ENCODE measurements at regions of chr20 and their contacts with region 1.

Region 1: GRCh38 chr20:49484180-49485140 is 2.0 kb upstream of the KCNB1 start:
- DNase-seq: peak; percentile 73
- H3K4me3 ChIP-seq: peak overlapping the region; percentile 11 to 49 (median 41)
- H3K27ac ChIP-seq: no peak overlapping the region
- H3K4me1 ChIP-seq: peaks cover 6% of the 10 kb centered on the region
- H3K27me3 ChIP-seq: peaks cover 4% of the 10 kb centered on the region
- CTCF ChIP-seq: peak; percentile 48 to 84

Region 2: DNA sequence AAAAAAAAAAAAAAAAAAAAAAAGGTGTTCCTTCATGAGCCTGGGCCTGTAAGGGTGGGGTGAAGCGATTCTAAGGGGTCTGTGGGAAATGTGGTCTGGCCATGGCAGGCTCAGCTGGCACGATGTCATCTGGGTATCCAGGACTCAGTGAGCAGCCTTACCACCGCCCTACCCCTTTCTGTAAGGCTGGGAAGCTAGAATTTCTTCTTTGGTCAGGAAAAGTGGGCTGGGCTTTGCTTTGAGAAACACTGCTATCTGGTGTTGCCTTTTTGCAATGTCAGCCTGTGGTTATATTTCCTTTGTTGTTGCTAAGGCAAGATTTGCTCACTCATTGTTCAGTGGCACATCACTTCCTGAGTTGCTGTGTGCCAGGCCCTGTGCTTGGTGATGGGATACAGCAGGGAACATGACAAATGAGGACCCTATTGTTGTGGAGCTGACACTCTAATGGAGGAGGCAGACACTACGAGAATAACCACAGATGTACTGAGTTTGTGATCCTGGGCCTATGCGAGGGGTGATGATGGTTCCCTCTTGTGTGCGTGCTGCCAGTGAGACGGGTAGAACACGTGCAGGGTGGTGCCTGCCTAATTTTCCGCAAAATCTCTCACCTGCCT is 160.7 kb before region 1 on chr20:
- CTCF ChIA-PET with region 1: no interaction called
- dilution Hi-C with region 1: loop called (anchors 5 kb)
- in situ Hi-C with region 1: no loop called
- intact Hi-C with region 1: no loop called
- DNase-seq: peak; percentile 73
- H3K4me3 ChIP-seq: no peak overlapping the region
- H3K27ac ChIP-seq: no peak overlapping the region
- H3K4me1 ChIP-seq: peaks cover 9% of the 10 kb centered on the region
- H3K27me3 ChIP-seq: peaks cover 16% of the 10 kb centered on the region
- CTCF ChIP-seq: peak; percentile 25 to 59

Region 3: DNA sequence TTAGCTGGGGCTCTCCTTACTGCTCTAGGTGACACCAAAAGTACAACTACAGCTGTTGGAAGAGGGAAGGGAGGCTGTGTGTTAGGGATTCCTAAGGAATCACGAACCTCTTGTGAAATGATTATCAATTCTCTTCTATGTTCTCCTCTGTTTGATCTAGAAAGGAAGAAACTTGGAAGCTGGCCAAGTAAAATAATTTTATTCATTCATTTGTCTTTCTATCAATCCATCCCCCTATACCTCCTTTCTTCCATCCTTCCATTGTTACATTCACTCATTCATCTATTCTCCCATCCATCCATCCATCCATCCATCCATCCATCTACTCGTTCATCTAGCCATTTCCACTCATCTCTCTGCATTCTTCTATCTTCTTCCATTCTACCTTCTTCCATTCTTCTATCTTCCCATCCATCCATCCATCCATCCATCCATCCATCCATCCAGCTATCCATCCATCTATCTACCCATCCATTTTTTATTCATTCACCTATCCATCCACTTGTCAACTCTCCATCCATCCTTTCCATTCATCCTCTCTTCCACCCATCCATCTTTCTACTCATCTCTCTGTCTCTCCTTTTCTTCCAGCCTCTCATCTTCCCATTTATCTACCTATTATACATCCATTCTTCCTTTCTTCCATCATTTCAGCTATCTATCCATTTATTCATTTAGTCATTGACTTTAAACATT is 153.8 kb before region 1 on chr20:
- CTCF ChIA-PET with region 1: interaction called, 10 read pairs
- dilution Hi-C with region 1: no loop called
- in situ Hi-C with region 1: loop called (anchors 5 kb)
- intact Hi-C with region 1: loop called (anchors 1 kb)
- DNase-seq: no peak
- H3K4me3 ChIP-seq: no peak overlapping the region
- H3K27ac ChIP-seq: no peak overlapping the region
- H3K4me1 ChIP-seq: no peaks in the 10 kb centered on the region
- H3K27me3 ChIP-seq: peaks cover 5% of the 10 kb centered on the region
- CTCF ChIP-seq: no peak

Region 4: DNA sequence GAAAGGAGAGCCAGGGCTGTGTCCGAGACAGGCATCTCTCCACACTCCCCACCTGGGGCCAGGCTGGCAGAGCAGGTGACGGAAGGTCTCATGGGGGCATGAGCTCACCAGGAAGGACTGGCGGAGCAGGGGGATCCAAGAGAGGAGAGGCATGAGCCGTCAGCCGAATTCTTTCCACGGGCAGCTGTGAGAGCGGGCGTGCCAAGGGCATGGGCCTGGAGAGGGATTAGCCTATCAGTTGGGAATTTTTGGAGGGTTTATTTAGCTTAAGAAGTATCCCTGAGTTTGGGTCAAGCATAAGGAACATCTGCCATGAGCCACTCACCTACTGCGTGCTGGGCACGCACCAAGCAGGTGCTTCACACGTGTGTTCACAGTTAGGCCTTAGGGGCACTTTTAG is 146.4 kb before region 1 on chr20:
- CTCF ChIA-PET with region 1: interaction called, 10 read pairs
- dilution Hi-C with region 1: no loop called
- in situ Hi-C with region 1: loop called (anchors 5 kb)
- intact Hi-C with region 1: loop called (anchors 1 kb)
- DNase-seq: no peak
- H3K4me3 ChIP-seq: no peak overlapping the region
- H3K27ac ChIP-seq: no peak overlapping the region
- H3K4me1 ChIP-seq: no peaks in the 10 kb centered on the region
- H3K27me3 ChIP-seq: no peaks in the 10 kb centered on the region
- CTCF ChIP-seq: no peak

Region 5: GRCh38 chr20:49384437-49385088 is 99.9 kb before region 1 on chr20:
- CTCF ChIA-PET with region 1: interaction called, 6 read pairs
- dilution Hi-C with region 1: loop called (anchors 5 kb)
- in situ Hi-C with region 1: no loop called
- intact Hi-C with region 1: loop called (anchors 1 kb)
- DNase-seq: no peak
- H3K4me3 ChIP-seq: no peak overlapping the region
- H3K27ac ChIP-seq: no peak overlapping the region
- H3K4me1 ChIP-seq: peaks cover 17% of the 10 kb centered on the region
- H3K27me3 ChIP-seq: no peaks in the 10 kb centered on the region
- CTCF ChIP-seq: peak; percentile 64 to 77

Region 6: GRCh38 chr20:49435659-49436058 is 48.8 kb before region 1 on chr20:
- CTCF ChIA-PET with region 1: no interaction called
- dilution Hi-C with region 1: no loop called
- in situ Hi-C with region 1: no loop called
- intact Hi-C with region 1: loop called (anchors 2 kb)
- DNase-seq: no peak
- H3K4me3 ChIP-seq: no peak overlapping the region
- H3K27ac ChIP-seq: no peak overlapping the region
- H3K4me1 ChIP-seq: peaks cover 10% of the 10 kb centered on the region
- H3K27me3 ChIP-seq: peaks cover 4% of the 10 kb centered on the region
- CTCF ChIP-seq: peak in 1 of 2 donors; percentile 26

Region 7: DNA sequence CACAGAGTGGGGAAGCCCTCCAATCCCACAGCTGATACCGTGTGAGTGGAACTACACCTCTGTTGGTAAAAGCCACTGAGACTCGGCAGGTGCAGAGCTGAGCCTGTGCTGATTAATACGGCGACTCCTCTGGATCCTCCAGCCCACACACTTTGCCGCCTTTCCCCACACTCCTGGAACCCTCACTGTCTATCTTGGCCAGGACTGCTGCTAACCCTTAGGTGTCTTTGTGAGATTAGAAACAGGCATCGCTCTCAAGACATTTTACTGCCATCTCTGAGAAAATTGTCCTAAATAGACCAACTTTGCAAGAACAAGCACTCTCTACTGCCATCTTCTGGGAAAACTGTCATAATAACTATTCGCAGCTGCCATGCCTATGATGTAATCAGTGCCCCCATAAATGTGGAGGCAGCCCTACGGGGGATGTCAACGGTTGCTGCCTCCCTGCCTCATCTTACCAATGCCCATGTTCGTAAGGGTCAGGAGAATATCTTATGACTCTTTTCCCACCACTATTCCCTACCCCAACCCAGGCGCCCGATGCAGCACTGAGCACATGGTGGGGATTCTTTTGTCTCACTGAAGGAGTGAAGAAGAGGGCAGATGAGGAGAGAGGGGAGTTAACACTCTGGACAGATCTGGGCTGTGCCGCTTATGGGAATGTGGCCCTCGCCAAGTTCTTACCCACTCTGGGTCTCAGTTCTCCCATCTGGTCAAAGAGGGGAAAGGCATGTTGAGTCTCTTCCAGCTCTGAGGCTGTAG is 24.2 kb after region 1 on chr20:
- CTCF ChIA-PET with region 1: interaction called, 4 read pairs
- dilution Hi-C with region 1: no loop called
- in situ Hi-C with region 1: no loop called
- intact Hi-C with region 1: loop called (anchors 1 kb)
- DNase-seq: peak; percentile 12
- H3K4me3 ChIP-seq: no peak overlapping the region
- H3K27ac ChIP-seq: no peak overlapping the region
- H3K4me1 ChIP-seq: no peaks in the 10 kb centered on the region
- H3K27me3 ChIP-seq: peaks cover 2% of the 10 kb centered on the region
- CTCF ChIP-seq: peak; percentile 54 to 63

Region 8: GRCh38 chr20:49846206-49846807 is 361.8 kb after region 1 on chr20:
- CTCF ChIA-PET with region 1: no interaction called
- dilution Hi-C with region 1: no loop called
- in situ Hi-C with region 1: no loop called
- intact Hi-C with region 1: no loop called
- DNase-seq: peak; percentile 48
- H3K4me3 ChIP-seq: no peak overlapping the region
- H3K27ac ChIP-seq: no peak overlapping the region
- H3K4me1 ChIP-seq: peaks cover 15% of the 10 kb centered on the region
- H3K27me3 ChIP-seq: no peaks in the 10 kb centered on the region
- CTCF ChIP-seq: peak; percentile 46 to 65

Region 9: DNA sequence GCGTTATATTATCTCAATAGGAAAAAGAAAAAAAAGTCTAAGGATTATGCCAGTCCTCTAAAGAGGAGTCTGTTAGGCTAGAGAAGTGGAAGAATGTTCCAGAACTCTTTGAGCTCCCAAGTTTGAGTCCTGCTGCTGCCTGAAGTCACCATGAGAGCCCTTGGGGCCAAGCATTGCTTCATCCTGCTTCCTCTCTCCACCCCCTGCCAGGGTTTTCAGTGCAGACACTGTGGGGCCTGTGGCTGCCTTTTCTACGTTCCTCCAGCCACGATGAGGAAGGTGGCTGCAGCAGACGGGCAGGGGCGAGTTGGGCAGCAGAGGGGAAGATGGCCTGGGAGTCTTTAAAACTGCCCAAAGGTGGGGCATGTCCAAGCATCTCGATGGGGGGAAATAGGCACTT is 1752.8 kb after region 1 on chr20:
- CTCF ChIA-PET with region 1: no interaction called
- dilution Hi-C with region 1: no loop called
- in situ Hi-C with region 1: no loop called
- intact Hi-C with region 1: no loop called
- DNase-seq: no peak
- H3K4me3 ChIP-seq: no peak overlapping the region
- H3K27ac ChIP-seq: no peak overlapping the region
- H3K4me1 ChIP-seq: no peaks in the 10 kb centered on the region
- H3K27me3 ChIP-seq: no peaks in the 10 kb centered on the region
- CTCF ChIP-seq: no peak

Measured in mammary epithelial cell (primary cell).